ENCODE measurements at regions of chr1 and their contacts with region 1.

Region 1: GRCh38 chr1:5745776-5746610 is 246.2 kb downstream of the NPHP4 start:
- DNase-seq: peak; percentile 52 to 85 (median 72)
- H3K4me3 ChIP-seq: peak overlapping the region in 20 of 59 donors; percentile 11 to 55 (median 36)
- H3K27ac ChIP-seq: peak overlapping the region in 4 of 59 donors; percentile 22 to 58 (median 56)
- H3K27me3 ChIP-seq: peaks cover 0 to 10% (median 0%) of the 10 kb centered on the region in 45 donors
- CTCF ChIP-seq: peak; percentile 48 to 97 (median 90)

Region 2: GRCh38 chr1:4778056-4778455 is 967.9 kb before region 1 on chr1:
- intact Hi-C with region 1: loop called in 1 of 2 experiments (anchors 10 kb)
- DNase-seq: peak in 8 of 10 donors; percentile 19 to 69 (median 56)
- H3K4me3 ChIP-seq: peak overlapping the region in 2 of 59 donors; percentile 18 to 33
- H3K27ac ChIP-seq: peak overlapping the region in 13 of 59 donors; percentile 3 to 62 (median 22)
- H3K27me3 ChIP-seq: no peaks in the 10 kb centered on the region
- CTCF ChIP-seq: peak in 55 of 56 donors; percentile 34 to 82 (median 66)

Region 3: GRCh38 chr1:5514519-5515183 is 231.3 kb before region 1 on chr1:
- intact Hi-C with region 1: loop called (anchors 2 to 5 kb)
- DNase-seq: peak in 9 of 10 donors; percentile 64 to 85 (median 73)
- H3K4me3 ChIP-seq: no peak overlapping the region
- H3K27ac ChIP-seq: no peak overlapping the region
- H3K27me3 ChIP-seq: no peaks in the 10 kb centered on the region
- CTCF ChIP-seq: peak; percentile 97 to 100 (median 99)

Region 4: DNA sequence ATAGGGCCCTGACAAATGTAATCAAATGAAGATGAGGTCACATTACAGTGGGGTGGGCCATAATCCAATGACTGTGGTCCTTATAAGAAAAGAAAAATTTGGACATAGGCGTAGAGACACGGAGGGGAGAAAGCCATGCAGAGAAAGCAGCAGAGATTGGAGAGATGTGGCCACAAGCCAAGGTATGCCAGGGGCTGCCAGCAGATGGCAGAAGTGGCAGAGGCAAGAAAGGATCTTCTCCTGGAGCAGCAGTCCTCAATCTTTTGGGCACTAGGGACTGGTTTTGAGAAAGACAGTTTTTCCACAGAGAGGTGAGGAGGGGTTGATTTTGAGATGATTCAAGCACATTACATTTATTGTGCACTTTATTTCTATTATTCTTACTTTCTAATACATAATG is 108.8 kb before region 1 on chr1:
- intact Hi-C with region 1: loop called in 1 of 2 experiments (anchors 10 kb)
- DNase-seq: peak in 4 of 10 donors; percentile 52 to 65 (median 56)
- H3K4me3 ChIP-seq: no peak overlapping the region
- H3K27ac ChIP-seq: no peak overlapping the region
- H3K27me3 ChIP-seq: peaks cover 0 to 19% (median 0%) of the 10 kb centered on the region in 45 donors
- CTCF ChIP-seq: peak in 55 of 56 donors; percentile 19 to 65 (median 46)